ENCODE measurements at regions of chr18 and their contacts with region 1.

Region 1: DNA sequence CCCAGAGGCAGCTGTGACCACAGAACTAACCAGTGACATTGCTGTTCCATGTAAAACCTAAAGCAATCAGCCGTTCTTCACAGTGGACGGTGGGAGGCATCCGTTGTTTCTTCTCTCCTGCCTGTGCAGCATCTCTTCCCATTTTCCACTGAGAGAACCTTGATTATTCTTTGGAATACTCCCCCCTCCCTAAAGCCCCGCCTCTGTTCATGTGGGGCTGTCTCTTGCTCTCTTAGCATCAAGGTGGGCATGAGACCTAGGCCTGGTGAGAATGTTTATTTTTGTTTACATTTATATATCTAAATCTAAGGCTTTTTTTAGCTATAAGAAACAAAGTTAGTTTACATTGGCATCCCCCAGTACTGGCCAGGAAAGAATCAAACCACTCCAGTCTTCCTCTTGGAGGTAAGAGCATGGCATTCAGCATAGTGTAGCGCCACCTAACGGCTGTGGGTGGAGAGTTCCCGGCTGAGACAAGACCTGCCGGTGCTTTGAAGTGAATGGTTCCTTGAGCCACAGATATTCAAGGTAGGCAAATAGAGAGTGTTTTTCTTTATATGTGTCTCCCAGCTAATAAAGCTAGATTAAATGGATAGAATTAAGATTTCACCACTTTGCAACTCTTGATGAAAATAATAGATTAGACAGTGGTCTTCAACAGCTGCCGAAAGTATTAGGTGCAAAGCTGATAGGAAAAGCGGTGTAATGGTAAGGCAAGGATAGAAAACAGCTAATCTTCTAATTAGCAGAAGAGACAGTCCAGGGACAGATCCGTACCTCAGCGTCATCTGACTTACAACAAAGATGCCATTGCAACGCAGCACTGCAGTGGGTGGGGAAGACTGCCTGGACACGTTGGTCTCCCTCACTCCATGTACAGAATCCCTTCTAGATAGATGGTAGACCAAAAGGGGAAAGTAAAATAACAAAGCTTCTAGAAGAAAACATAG is 219.6 kb upstream of the RAB12 start:
- DNase-seq: peak in 5 of 6 donors; percentile 45 to 84 (median 67)
- ATAC-seq: peak; percentile 74 to 94 (median 92)
- H3K4me3 ChIP-seq: no peak overlapping the region
- H3K27ac ChIP-seq: no peak overlapping the region
- H3K4me1 ChIP-seq: peaks cover 0 to 4% (median 0%) of the 10 kb centered on the region in 3 donors
- H3K27me3 ChIP-seq: no peaks in the 10 kb centered on the region
- CTCF ChIP-seq: peak; percentile 62 to 69 (median 67)

Region 2: GRCh38 chr18:7272311-7273049 is 1117.2 kb before region 1 on chr18:
- intact Hi-C with region 1: loop called in 1 of 3 experiments (anchors 10 kb)
- DNase-seq: peak in 5 of 6 donors; percentile 35 to 69 (median 58)
- ATAC-seq: peak; percentile 89 to 94 (median 90)
- H3K4me3 ChIP-seq: peak overlapping the region in 1 of 4 donors; percentile 30
- H3K27ac ChIP-seq: peak overlapping the region in 2 of 4 donors; percentile 17 to 42
- H3K4me1 ChIP-seq: peaks cover 0 to 6% (median 0%) of the 10 kb centered on the region in 3 donors
- H3K27me3 ChIP-seq: no peaks in the 10 kb centered on the region
- CTCF ChIP-seq: peak in 3 of 4 donors; percentile 27 to 40 (median 31)

Region 3: DNA sequence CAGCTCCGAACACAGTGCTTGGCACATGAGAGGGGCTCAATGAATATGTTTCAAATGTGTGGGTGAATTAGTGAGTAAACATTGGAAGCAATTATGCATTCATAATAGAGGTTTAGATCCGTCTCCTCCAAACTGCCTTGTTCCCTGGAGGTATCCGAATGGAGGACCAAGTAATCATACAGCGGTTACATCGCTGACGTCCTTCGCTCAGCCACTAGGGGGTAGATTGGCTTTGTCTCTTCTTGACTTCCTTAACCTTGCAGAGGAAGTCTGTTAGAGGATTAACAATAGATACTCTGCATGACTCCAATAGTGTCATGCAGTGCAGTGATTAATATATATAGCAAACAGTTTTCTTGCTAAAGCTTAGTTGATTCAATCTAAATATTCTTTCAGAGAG is 305.5 kb before region 1 on chr18:
- intact Hi-C with region 1: loop called in 1 of 3 experiments (anchors 10 kb)
- DNase-seq: peak in 2 of 6 donors; percentile 22 to 46
- ATAC-seq: peak; percentile 55 to 88 (median 76)
- H3K4me3 ChIP-seq: no peak overlapping the region
- H3K27ac ChIP-seq: no peak overlapping the region
- H3K4me1 ChIP-seq: no peaks in the 10 kb centered on the region
- H3K27me3 ChIP-seq: no peaks in the 10 kb centered on the region
- CTCF ChIP-seq: peak in 2 of 4 donors; percentile 19 to 25

Measured in pancreas (tissue), 10 donors.